Activated T-helper 1 cell treated with anti-CD3 and anti-CD28 coated beads, Interleukin-12 subunit alpha, Interleukin-12 subunit beta, Interleukin-2, Interleukin-4 antibody, amounts not matched to agents 30 ng/mL and 10 ng/mL and 1 ng/mL, durations not matched to agents 14 hours and 24 hours and 36 hours (primary cell): ENCODE measurements at regions of chr1 and their contacts with region 1.

Region 1: DNA sequence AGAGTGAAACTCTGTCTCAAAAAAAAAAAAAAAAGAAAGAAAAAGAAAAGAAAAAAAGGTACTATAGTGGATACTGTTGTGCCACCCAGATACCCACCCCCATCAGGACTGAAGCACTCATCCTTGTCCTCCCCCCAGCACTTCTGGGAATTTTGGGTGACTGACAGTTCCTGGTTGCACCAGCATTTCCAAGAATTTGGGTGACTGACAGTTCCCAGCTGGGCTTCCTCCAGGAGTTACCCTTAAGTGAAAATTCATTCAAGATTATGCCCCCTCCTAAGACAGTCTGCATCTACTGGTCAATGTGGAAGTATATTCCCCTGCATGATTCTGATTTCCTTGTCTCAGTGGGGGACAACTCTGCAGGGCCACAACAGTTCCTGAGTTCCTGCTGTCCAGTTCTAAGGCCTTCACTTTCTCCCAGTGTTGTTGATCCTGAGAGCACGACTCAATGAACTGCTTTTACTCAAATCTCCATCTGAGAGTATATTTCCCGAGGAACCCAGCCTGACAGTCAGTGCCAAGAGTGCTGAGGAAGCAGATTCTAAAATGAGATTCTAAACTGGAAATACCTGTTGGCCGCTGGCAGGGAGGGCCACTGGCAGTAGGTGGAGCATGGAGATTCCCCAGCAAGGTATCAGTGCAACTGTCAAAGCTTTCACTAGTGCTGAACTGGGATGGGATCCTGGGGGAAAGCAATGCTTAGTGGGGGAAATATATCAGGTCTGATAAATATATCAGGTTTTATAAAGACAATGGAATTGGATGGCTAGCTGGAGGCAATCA is 18.5 kb downstream of the RIIAD1 start:
- DNase-seq: no peak
- H3K4me3 Mint-ChIP-seq: no peak overlapping the region
- H3K27ac Mint-ChIP-seq: no peak overlapping the region
- H3K4me1 Mint-ChIP-seq: no peaks in the 10 kb centered on the region
- H3K27me3 Mint-ChIP-seq: peaks cover 8% of the 10 kb centered on the region

Region 2: DNA sequence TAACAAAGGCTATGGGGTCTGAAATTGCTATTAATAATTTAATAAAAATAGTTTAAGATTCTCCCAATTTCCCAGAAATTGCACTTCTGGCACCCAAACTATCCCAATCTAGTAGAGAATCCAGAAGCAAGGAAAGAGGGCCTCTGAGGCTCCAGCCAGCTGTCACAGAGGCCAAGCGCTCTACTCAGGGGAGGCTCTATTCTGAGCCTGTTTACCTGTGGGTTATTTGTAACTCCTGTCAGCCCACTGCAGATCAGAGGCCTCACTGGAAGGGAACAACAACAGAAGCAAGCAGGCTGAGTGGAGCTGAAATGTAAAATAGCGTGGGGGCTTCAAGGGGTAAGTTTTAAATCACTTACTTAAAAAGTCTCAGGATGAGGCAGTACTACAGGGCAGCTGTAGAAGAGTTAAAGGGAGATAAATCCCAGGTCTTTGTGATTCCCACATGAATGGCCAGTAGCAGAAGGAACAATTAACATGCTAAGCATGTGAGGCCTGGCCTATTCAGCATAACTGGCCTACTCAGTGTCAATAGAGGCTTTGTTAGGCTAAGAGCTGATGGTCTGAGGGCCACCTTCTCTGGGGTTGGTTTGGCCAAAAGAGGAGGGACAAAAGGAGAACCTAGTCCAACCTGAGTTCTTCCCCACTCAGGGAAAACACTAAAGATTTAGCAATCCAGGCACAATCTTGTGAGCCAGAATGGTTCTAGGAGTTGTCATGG is 444.9 kb before region 1 on chr1:
- intact Hi-C with region 1: loop called (anchors 5 kb)
- DNase-seq: no peak
- H3K4me3 Mint-ChIP-seq: no peak overlapping the region
- H3K27ac Mint-ChIP-seq: no peak overlapping the region
- H3K4me1 Mint-ChIP-seq: no peaks in the 10 kb centered on the region
- H3K27me3 Mint-ChIP-seq: no peaks in the 10 kb centered on the region

Region 3: DNA sequence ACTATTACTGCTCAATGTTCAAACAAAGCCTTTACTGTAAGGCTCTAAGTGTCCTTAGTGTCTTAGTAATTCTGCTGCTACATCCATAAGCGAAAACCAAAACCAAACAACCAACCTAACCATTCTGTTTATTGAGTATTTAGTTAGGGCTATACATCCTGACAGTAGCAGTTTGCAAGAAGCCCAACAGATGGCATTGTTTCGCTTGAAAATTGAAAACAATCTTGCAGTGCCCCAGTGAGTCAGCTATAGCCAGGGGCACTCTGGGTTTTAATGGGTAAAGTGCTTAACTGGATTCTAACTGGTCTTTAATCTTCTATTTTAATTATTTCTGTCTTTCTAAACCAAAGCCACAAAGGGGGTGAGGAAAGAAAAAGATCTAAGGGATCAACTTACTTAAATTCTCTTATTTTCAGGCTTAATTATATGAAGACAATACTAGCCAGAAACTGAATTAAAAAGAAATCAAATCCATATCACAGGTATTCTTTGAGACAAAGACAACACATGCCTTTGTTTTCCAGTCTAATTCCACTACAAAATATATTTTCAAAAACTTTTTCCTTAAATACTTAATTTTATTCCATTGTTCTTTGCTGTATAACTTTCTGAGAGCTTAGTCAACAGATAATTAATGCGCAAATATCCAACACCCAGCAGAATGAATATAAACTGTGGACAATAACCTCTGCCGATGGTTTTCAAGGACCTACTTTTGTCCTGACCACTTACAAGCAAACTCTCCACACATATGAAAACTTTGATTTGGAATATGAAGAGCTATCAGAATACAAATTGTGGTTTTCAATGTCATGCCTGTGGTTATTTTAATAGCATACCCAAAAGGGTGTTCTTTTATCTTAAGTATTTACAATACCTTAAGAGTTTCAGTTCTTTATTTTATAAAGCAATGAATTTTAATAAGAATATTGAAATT is 295.7 kb before region 1 on chr1:
- intact Hi-C with region 1: loop called (anchors 1 kb)
- DNase-seq: peak; percentile 50
- H3K4me3 Mint-ChIP-seq: no peak overlapping the region
- H3K27ac Mint-ChIP-seq: no peak overlapping the region
- H3K4me1 Mint-ChIP-seq: peaks cover 36% of the 10 kb centered on the region
- H3K27me3 Mint-ChIP-seq: no peaks in the 10 kb centered on the region

Region 4: DNA sequence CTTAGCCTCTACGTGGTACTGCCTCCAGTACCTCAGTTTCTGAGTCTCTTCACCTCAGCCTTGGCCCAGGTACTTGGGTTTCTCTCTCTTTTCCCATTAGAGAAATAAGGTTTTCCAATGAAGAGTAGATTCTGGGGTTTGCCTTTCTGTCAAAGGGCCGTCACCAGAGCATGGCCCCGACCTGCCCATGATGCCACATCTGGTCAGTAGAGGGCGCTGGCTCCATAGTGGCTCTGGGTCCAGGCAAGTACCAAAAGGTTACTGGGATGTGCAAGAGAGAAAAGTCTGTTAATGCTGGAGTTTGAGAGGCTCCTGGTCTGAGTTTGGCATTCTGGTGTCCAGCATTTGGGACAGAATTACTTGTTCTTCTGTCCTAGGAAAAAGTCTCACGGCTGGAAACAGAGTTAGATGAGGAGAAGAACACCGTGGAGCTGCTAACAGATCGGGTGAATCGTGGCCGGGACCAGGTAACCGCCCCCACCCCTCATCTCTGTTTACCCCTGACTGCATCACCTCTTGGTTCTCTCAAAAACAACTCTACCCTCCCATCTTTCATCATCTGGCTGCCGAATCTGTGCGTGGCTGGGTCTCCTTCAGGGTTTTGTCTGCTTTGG is 205.0 kb before region 1 on chr1:
- intact Hi-C with region 1: loop called (anchors 1 kb)
- DNase-seq: peak; percentile 67
- H3K4me3 Mint-ChIP-seq: no peak overlapping the region
- H3K27ac Mint-ChIP-seq: no peak overlapping the region
- H3K4me1 Mint-ChIP-seq: no peaks in the 10 kb centered on the region
- H3K27me3 Mint-ChIP-seq: peaks cover 5% of the 10 kb centered on the region

Region 5: DNA sequence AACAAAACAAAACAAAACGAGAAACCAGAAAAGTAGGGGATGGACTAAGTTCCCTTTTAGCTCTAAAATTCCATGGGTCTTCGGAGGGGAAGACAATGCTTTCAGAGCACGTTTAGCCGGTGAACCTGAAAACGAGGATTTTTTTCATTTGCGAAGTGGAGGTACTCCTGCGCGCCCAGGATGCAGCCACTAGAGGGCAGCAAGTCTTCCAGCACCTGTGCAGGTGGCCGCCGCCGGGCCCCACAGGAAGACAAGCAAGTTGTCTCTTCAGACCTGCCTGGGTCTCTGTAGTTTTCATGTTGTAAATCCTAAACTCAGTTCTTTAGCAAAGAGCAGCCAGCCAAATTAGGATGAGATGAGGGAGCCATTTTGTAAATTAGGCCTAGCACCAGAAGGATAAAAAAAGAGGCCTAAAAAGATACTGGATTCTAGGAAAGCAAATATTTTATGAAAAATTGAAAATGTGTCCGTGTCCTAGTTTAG is 145.6 kb before region 1 on chr1:
- intact Hi-C with region 1: loop called (anchors 1 kb)
- DNase-seq: peak; percentile 75
- H3K4me3 Mint-ChIP-seq: peak overlapping the region; percentile 52
- H3K27ac Mint-ChIP-seq: no peak overlapping the region
- H3K4me1 Mint-ChIP-seq: peaks cover 12% of the 10 kb centered on the region
- H3K27me3 Mint-ChIP-seq: peaks cover 8% of the 10 kb centered on the region

Region 6: GRCh38 chr1:151693076-151693651 is 46.6 kb before region 1 on chr1:
- intact Hi-C with region 1: loop called (anchors 1 kb)
- DNase-seq: no peak
- H3K4me3 Mint-ChIP-seq: no peak overlapping the region
- H3K27ac Mint-ChIP-seq: no peak overlapping the region
- H3K4me1 Mint-ChIP-seq: no peaks in the 10 kb centered on the region
- H3K27me3 Mint-ChIP-seq: no peaks in the 10 kb centered on the region

Region 7: DNA sequence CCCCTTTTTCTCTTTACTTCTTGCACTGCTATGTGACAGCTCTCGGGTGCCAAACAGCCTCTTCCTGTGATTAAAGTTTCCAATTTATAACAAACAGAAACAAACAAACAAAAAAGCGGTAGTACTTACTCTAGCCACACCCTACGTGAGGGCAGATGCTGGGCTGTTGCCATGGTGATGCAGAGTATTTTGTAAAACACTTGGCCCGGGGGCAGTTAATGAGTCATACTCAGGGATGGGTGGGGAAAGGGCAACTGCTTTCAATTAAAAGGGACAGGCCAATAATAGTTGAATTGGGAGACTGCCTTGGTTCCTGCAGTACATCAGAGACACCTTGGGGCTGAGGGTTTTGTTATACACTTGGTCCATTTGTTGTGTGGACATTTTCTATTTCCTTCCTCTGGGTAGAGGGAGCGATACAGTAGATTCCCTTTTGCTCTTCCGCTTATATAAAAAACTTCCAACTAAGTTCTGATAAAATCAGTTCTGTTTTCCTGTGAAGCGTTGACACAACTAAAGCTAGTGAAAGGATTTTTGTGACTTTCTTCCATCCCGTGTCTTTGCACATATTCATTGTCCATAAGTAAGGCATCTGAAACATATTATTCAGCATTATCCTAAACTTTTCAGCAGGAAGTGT is 206.1 kb after region 1 on chr1:
- intact Hi-C with region 1: no loop called
- DNase-seq: peak; percentile 77
- H3K4me3 Mint-ChIP-seq: peak overlapping the region; percentile 58
- H3K27ac Mint-ChIP-seq: peak overlapping the region; percentile 88
- H3K4me1 Mint-ChIP-seq: peaks cover 50% of the 10 kb centered on the region
- H3K27me3 Mint-ChIP-seq: peaks cover 1% of the 10 kb centered on the region